Left lung (tissue), 14 donors: ENCODE measurements at regions of chr12 and their contacts with region 1.

Region 1: GRCh38 chr12:22443379-22444316 is 100.7 kb downstream of the C2CD5 start:
- DNase-seq: peak in 2 of 4 donors; percentile 59 to 85
- ATAC-seq: peak; percentile 100
- H3K4me3 ChIP-seq: no peak overlapping the region
- H3K27ac ChIP-seq: no peak overlapping the region
- H3K4me1 ChIP-seq: no peaks in the 10 kb centered on the region
- H3K27me3 ChIP-seq: no peaks in the 10 kb centered on the region
- CTCF ChIP-seq: peak; percentile 64

Region 2: DNA sequence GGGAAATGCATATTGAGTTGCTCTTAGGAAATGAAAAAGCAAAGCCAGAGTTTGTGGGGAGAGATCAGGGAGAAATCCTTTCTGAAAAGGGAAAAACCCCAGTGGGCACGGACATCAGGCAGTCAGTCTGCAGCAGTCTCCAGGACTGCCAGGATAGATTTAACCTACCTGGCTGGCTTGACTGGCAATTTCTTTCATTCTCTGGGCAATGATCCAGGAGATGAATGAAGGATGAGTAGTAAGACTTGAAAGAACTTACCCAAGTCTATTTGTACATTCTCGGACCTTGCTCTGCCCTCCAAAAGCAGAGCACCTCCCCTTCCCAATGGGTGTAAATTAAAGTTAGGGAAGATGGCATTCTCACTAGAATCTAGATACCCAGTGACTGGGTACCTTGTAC is 354.8 kb before region 1 on chr12:
- intact Hi-C with region 1: loop called in 1 of 2 experiments (anchors 5 kb)
- DNase-seq: no peak
- ATAC-seq: no peak
- H3K4me3 ChIP-seq: no peak overlapping the region
- H3K27ac ChIP-seq: no peak overlapping the region
- H3K4me1 ChIP-seq: no peaks in the 10 kb centered on the region
- H3K27me3 ChIP-seq: no peaks in the 10 kb centered on the region
- CTCF ChIP-seq: no peak

Region 3: DNA sequence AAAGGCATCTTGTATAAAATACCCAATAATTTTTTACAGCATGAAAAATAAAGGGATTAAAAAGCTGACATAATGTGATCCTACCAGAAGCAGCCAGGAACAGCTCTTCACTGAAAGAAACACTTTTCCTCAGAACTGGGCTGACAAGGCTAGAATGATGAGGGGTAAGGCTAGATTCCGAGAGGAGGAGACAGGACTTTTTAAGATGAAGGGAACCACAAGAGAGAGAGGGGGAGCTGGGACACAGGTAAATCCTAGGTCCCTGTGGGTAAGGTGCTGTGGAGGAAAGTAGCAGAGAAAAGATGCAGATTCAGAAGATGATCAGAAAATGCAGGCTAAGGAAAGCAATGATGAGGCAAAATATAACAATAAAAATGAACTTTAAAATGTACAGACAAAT is 71.2 kb after region 1 on chr12:
- intact Hi-C with region 1: no loop called
- DNase-seq: no peak
- ATAC-seq: no peak
- H3K4me3 ChIP-seq: no peak overlapping the region
- H3K27ac ChIP-seq: no peak overlapping the region
- H3K4me1 ChIP-seq: no peaks in the 10 kb centered on the region
- H3K27me3 ChIP-seq: no peaks in the 10 kb centered on the region
- CTCF ChIP-seq: no peak